ENCODE measurements at regions of chr17 and their contacts with region 1.

Region 1: GRCh38 chr17:83051395-83052233 is 27.8 kb upstream of the METRNL start:
- DNase-seq: peak; percentile 98
- H3K4me3 Mint-ChIP-seq: peak overlapping the region; percentile 90
- H3K27ac Mint-ChIP-seq: peak overlapping the region; percentile 84
- H3K4me1 Mint-ChIP-seq: peaks cover 26% of the 10 kb centered on the region
- H3K27me3 Mint-ChIP-seq: no peaks in the 10 kb centered on the region

Region 2: GRCh38 chr17:82648166-82648668 is 403.4 kb before region 1 on chr17 and contains the start of gene WDR45B:
- intact Hi-C with region 1: loop called (anchors 2 kb)
- DNase-seq: peak; percentile 90
- H3K4me3 Mint-ChIP-seq: peak within 1 kb of the TSS; percentile 89
- H3K27ac Mint-ChIP-seq: peak within 1 kb of the TSS; percentile 76
- H3K4me1 Mint-ChIP-seq: peaks cover 25% of the 10 kb centered on the region
- H3K27me3 Mint-ChIP-seq: no peaks in the 10 kb centered on the region
- total RNA-seq, gene WDR45B: 55.1 and 56.7 TPM in 2 replicates

Region 3: GRCh38 chr17:82751571-82752370 is 299.8 kb before region 1 on chr17 and contains the start of gene TBCD:
- intact Hi-C with region 1: loop called (anchors 5 kb)
- DNase-seq: peak; percentile 81
- H3K4me3 Mint-ChIP-seq: peak within 1 kb of the TSS; percentile 90
- H3K27ac Mint-ChIP-seq: peak within 1 kb of the TSS; percentile 61
- H3K4me1 Mint-ChIP-seq: peaks cover 27% of the 10 kb centered on the region
- H3K27me3 Mint-ChIP-seq: peaks cover 4% of the 10 kb centered on the region
- total RNA-seq, gene TBCD: 106 and 111 TPM in 2 replicates

Region 4: GRCh38 chr17:82781894-82782274 is 269.7 kb before region 1 on chr17:
- intact Hi-C with region 1: loop called (anchors 2 kb)
- DNase-seq: peak; percentile 80
- H3K4me3 Mint-ChIP-seq: no peak overlapping the region
- H3K27ac Mint-ChIP-seq: no peak overlapping the region
- H3K4me1 Mint-ChIP-seq: peaks cover 7% of the 10 kb centered on the region
- H3K27me3 Mint-ChIP-seq: no peaks in the 10 kb centered on the region

Region 5: GRCh38 chr17:82978765-82979349 is 72.8 kb before region 1 on chr17:
- intact Hi-C with region 1: loop called (anchors 1 kb)
- DNase-seq: no peak
- H3K4me3 Mint-ChIP-seq: peak overlapping the region; percentile 32
- H3K27ac Mint-ChIP-seq: peak overlapping the region; percentile 69
- H3K4me1 Mint-ChIP-seq: peaks cover 20% of the 10 kb centered on the region
- H3K27me3 Mint-ChIP-seq: no peaks in the 10 kb centered on the region

Region 6: GRCh38 chr17:82993005-82993404 is 58.6 kb before region 1 on chr17:
- intact Hi-C with region 1: no loop called
- DNase-seq: no peak
- H3K4me3 Mint-ChIP-seq: no peak overlapping the region
- H3K27ac Mint-ChIP-seq: no peak overlapping the region
- H3K4me1 Mint-ChIP-seq: peaks cover 16% of the 10 kb centered on the region
- H3K27me3 Mint-ChIP-seq: peaks cover 7% of the 10 kb centered on the region

Region 7: DNA sequence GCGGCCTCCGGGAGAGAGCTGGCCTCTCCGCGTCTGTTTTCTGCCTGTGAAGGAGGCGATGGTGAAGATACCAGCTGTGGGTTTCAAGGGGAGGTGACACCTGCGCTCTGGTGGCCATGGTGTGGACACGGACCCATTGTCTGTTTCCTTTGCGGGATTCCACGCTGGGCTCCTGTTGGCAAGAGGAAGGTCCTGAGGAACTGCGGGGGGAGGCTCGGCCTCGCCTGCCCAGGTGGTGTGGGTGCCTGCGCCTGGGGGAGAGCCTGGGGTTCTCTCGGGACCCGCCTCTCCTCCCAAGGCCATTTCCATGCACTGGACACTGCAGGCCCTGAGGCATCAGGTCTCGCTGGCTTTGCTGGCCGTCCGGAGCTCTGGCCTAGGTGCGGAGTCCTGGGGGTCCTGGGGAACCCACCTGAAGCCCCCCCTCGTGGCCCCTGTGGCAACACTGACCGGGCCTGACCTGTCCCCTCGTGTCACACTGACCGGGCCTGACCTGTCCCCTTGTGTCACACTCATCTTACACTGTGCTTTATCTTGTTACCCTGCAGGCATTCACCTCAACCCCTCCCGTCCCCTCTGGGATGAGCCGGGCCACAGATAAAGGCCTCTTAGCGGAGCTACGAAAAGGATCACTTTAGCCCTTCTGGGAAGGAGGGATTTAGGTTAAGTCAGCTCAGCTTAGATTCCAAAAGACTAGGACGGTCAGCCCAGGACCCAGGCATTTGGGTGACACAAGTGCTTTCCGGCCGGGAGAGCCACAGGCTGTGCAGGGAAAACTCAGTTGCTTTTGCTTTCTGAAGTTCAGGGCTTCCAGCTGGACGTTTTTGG is 15.8 kb after region 1 on chr17:
- intact Hi-C with region 1: no loop called
- DNase-seq: no peak
- H3K4me3 Mint-ChIP-seq: peak overlapping the region; percentile 22
- H3K27ac Mint-ChIP-seq: peak overlapping the region; percentile 55
- H3K4me1 Mint-ChIP-seq: peaks cover 25% of the 10 kb centered on the region
- H3K27me3 Mint-ChIP-seq: peaks cover 5% of the 10 kb centered on the region

Region 8: DNA sequence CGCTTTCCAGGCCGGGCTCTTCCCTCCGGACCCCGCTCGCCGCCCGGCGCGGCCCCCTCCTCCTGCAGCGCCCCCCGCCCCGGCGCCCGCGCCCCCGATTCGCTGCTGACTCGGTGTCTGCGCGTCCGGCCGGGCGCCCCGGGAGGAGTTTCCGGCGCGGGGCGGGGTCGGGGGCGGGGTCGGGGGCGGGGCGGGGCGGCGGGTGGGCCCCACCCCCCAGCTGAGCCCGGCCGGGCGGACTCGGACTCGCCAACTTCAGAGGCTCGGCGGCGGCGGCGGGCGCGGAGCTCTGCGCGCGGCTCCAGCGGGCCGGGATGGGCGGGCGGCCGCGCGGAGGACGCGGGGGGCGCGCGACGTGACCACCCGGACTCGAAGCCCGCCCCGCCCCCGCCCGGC is 27.7 kb after region 1 on chr17 and contains the start of gene METRNL:
- intact Hi-C with region 1: loop called (anchors 1 kb)
- DNase-seq: peak; percentile 51
- H3K4me3 Mint-ChIP-seq: peak within 1 kb of the TSS; percentile 58
- H3K27ac Mint-ChIP-seq: no peak within 1 kb of the TSS
- H3K4me1 Mint-ChIP-seq: peaks cover 28% of the 10 kb centered on the region
- H3K27me3 Mint-ChIP-seq: peaks cover 11% of the 10 kb centered on the region
- total RNA-seq, gene METRNL: 31.1 and 31.4 TPM in 2 replicates

Region 9: GRCh38 chr17:83200202-83200699 is 148.6 kb after region 1 on chr17:
- intact Hi-C with region 1: no loop called
- DNase-seq: peak; percentile 68
- H3K4me3 Mint-ChIP-seq: peak overlapping the region; percentile 81
- H3K27ac Mint-ChIP-seq: peak overlapping the region; percentile 96
- H3K4me1 Mint-ChIP-seq: peaks cover 47% of the 10 kb centered on the region
- H3K27me3 Mint-ChIP-seq: no peaks in the 10 kb centered on the region